WTC11 (cell line): ENCODE measurements at regions of chr15 and their contacts with region 1.

Region 1: GRCh38 chr15:70853821-70854666 is at the start of gene LARP6:
- DNase-seq: peak; percentile 70
- ATAC-seq: peak; percentile 78
- H3K4me3 Mint-ChIP-seq: peak within 1 kb of the TSS; percentile 85
- H3K27ac Mint-ChIP-seq: peak within 1 kb of the TSS; percentile 49; the same call in 1 of the 2 replicates
- H3K4me1 Mint-ChIP-seq: peaks cover 8% of the 10 kb centered on the region
- H3K27me3 Mint-ChIP-seq: peaks cover 29% of the 10 kb centered on the region
- CTCF ChIP-seq: no peak
- total RNA-seq, gene LARP6: 14.7 to 17.5 TPM (median 15.2 TPM) in 3 replicates

Region 2: GRCh38 chr15:70875001-70875782 is 21.1 kb after region 1 on chr15:
- CTCF ChIA-PET with region 1: interaction called, 15 read pairs
- POLR2A ChIA-PET with region 1: no interaction called
- DNase-seq: no peak
- ATAC-seq: no peak
- H3K4me3 Mint-ChIP-seq: no peak overlapping the region
- H3K27ac Mint-ChIP-seq: no peak overlapping the region
- H3K4me1 Mint-ChIP-seq: no peaks in the 10 kb centered on the region
- H3K27me3 Mint-ChIP-seq: no peaks in the 10 kb centered on the region
- CTCF ChIP-seq: no peak

Region 3: GRCh38 chr15:71079208-71080021 is 225.4 kb after region 1 on chr15:
- CTCF ChIA-PET with region 1: no interaction called
- POLR2A ChIA-PET with region 1: no interaction called
- DNase-seq: no peak
- ATAC-seq: no peak
- H3K4me3 Mint-ChIP-seq: no peak overlapping the region
- H3K27ac Mint-ChIP-seq: no peak overlapping the region
- H3K4me1 Mint-ChIP-seq: no peaks in the 10 kb centered on the region
- H3K27me3 Mint-ChIP-seq: peaks cover 72% of the 10 kb centered on the region
- CTCF ChIP-seq: no peak